PC-9 (cell line): ENCODE measurements at regions of chr4 and their contacts with region 1.

Region 1: GRCh38 chr4:146175541-146176453 is at the start of gene LSM6:
- DNase-seq: peak; percentile 53 to 73
- H3K4me3 ChIP-seq: peak within 1 kb of the TSS; percentile 91
- H3K27ac ChIP-seq: peak within 1 kb of the TSS; percentile 57
- H3K4me1 ChIP-seq: peaks cover 12% of the 10 kb centered on the region
- H3K27me3 ChIP-seq: no peaks in the 10 kb centered on the region
- CTCF ChIP-seq: no peak
- total RNA-seq, gene LSM6: 43.3 and 45.6 TPM in 2 replicates

Region 2: GRCh38 chr4:145868637-145869409 is 307.0 kb before region 1 on chr4:
- CTCF ChIA-PET with region 1: interaction called, 11 read pairs
- POLR2A ChIA-PET with region 1: no interaction called
- intact Hi-C with region 1: no loop called
- DNase-seq: no peak
- H3K4me3 ChIP-seq: no peak overlapping the region
- H3K27ac ChIP-seq: no peak overlapping the region
- H3K4me1 ChIP-seq: no peaks in the 10 kb centered on the region
- H3K27me3 ChIP-seq: no peaks in the 10 kb centered on the region
- CTCF ChIP-seq: no peak; the same call in 1 of the 2 replicates

Region 3: GRCh38 chr4:146308951-146309350 is 133.2 kb after region 1 on chr4:
- CTCF ChIA-PET with region 1: no interaction called
- POLR2A ChIA-PET with region 1: no interaction called
- intact Hi-C with region 1: no loop called
- DNase-seq: no peak
- H3K4me3 ChIP-seq: no peak overlapping the region
- H3K27ac ChIP-seq: no peak overlapping the region
- H3K4me1 ChIP-seq: no peaks in the 10 kb centered on the region
- H3K27me3 ChIP-seq: no peaks in the 10 kb centered on the region
- CTCF ChIP-seq: no peak